ENCODE measurements at regions of chr11 and their contacts with region 1.

Region 1: GRCh38 chr11:26649884-26650283 is 72.0 kb downstream of the SLC5A12 start:
- DNase-seq: peak; percentile 54
- ATAC-seq: peak; percentile 94
- H3K4me3 ChIP-seq: no peak overlapping the region
- H3K27ac ChIP-seq: no peak overlapping the region
- H3K4me1 ChIP-seq: no peaks in the 10 kb centered on the region
- H3K27me3 ChIP-seq: no peaks in the 10 kb centered on the region
- CTCF ChIP-seq: peak; percentile 72 to 83 (median 75)
- EP300 ChIP-seq: no peak
- POLR2A ChIP-seq: no peak
- RAD21 ChIP-seq: peak; percentile 81

Region 2: DNA sequence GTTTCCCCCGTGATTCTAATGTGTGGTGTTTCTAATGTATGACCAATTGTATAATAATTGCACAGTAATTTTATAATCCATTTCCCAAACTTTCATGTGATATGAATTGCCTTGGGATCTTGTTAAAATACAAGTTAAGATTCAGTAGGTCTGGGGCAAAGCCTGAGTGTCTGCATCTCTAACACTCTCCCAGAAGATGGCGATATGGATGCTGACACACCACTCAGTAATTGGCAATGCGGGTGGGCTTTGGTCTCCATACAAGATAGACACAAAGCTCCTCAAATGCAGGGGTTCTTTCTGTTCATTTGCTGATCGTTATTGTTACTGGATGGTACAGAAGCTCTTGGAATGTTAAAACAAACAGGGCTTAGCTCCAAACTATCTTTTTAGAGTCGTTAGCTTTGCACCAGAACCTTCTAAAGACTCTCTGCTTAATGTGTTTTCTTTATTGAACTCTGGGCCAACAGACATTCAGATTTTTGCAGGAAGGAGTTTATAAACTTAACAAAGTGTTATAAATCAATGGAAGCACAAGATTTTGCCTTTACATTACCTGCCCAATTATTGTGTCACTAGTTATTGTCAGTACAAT is 363.3 kb before region 1 on chr11:
- CTCF ChIA-PET with region 1: interaction called, 9 read pairs
- POLR2A ChIA-PET with region 1: no interaction called
- RAD21 ChIA-PET with region 1: no interaction called
- SMC1A ChIA-PET with region 1: interaction called, 10 read pairs
- in situ Hi-C with region 1: no loop called
- intact Hi-C with region 1: no loop called
- DNase-seq: no peak
- ATAC-seq: peak; percentile 82
- H3K4me3 ChIP-seq: no peak overlapping the region
- H3K27ac ChIP-seq: no peak overlapping the region
- H3K4me1 ChIP-seq: no peaks in the 10 kb centered on the region
- H3K27me3 ChIP-seq: no peaks in the 10 kb centered on the region
- CTCF ChIP-seq: peak; percentile 34 to 56 (median 52); a peak in 3 of 6 replicates
- EP300 ChIP-seq: no peak
- POLR2A ChIP-seq: no peak
- RAD21 ChIP-seq: peak; percentile 33; the same call in 1 of the 2 replicates

Region 3: DNA sequence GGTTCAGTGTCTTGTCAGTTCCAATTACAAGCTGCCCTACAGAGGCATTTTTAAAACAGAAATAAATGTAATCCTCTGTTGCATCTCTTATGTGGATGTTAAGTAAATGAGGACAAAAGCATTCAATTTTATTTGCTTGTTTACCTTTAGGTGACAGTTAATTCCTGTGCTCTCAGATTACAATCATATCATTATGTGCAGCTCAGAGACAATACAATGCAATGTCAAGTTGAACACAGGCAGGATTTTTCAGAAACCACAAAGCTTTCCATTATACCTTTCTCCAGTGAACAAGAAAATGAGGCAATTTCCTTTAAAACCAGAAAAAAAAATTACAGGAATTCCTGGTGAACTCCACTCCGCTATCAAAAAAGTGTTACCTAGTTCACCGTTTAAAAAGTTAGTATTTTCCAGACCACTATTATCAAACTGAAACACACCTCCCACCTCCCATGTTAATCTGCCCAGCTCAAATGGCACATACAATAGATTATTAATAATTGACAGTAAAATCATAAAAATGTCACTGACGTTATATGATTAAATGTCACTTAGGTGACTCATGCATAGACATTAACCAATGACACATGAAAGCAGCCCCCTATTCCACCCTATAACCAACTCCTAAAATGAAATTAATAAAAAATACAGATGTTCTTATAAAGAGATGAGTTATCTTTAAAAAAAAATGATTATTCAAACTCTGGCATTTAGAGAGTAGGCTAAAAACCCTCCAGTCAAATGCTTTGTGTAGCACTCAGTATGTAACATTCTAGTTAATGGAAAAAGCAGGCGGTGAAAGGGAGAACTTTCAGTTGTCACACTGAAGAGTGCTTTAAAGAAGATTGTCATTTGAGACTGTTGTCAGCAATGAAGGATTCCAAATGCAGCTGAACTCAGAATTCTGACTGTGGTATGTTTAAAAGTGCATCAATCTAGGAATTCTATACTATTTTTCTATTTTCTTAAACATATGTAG is 176.4 kb before region 1 on chr11:
- CTCF ChIA-PET with region 1: interaction called, 28 read pairs
- POLR2A ChIA-PET with region 1: no interaction called
- RAD21 ChIA-PET with region 1: interaction called, 17 read pairs
- SMC1A ChIA-PET with region 1: interaction called, 37 read pairs
- in situ Hi-C with region 1: no loop called
- intact Hi-C with region 1: loop called (anchors 2 kb)
- DNase-seq: no peak
- ATAC-seq: peak; percentile 39
- H3K4me3 ChIP-seq: no peak overlapping the region
- H3K27ac ChIP-seq: no peak overlapping the region
- H3K4me1 ChIP-seq: no peaks in the 10 kb centered on the region
- H3K27me3 ChIP-seq: no peaks in the 10 kb centered on the region
- CTCF ChIP-seq: no peak
- EP300 ChIP-seq: no peak
- POLR2A ChIP-seq: no peak
- RAD21 ChIP-seq: no peak

Region 4: GRCh38 chr11:26551186-26551801 is 98.6 kb before region 1 on chr11:
- CTCF ChIA-PET with region 1: interaction called, 11 read pairs
- POLR2A ChIA-PET with region 1: no interaction called
- RAD21 ChIA-PET with region 1: interaction called, 6 read pairs
- SMC1A ChIA-PET with region 1: interaction called, 27 read pairs
- in situ Hi-C with region 1: no loop called
- intact Hi-C with region 1: loop called (anchors 1 kb)
- DNase-seq: no peak
- ATAC-seq: peak; percentile 55
- H3K4me3 ChIP-seq: no peak overlapping the region
- H3K27ac ChIP-seq: no peak overlapping the region
- H3K4me1 ChIP-seq: no peaks in the 10 kb centered on the region
- H3K27me3 ChIP-seq: no peaks in the 10 kb centered on the region
- CTCF ChIP-seq: peak in 2 of 3 experiments; percentile 19 to 35; a peak in 3 of 6 replicates
- EP300 ChIP-seq: no peak
- POLR2A ChIP-seq: no peak
- RAD21 ChIP-seq: peak; percentile 49; the same call in 1 of the 2 replicates

Region 5: DNA sequence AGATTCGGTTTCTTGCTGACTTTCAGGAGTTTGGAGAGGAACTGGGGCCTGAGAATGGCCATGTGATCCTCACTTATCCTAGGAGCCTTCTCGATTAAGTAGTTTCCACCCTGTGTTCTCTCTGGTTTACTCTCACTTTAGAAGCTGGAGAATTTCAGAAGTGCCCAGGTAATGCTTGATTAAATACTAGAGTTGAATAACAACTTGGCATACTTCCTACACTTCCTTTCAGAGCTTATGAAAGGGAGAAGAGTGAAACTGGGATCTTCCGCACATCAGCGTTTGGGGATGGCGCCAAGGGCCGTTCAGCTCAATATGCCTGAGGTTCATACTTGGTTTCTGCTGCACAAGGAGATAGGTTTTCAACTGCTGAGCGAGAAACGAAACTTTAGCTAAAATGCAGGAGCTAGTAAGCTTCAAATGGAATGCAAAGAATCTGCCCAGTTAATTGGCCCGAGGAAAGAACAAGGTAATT is 77.1 kb before region 1 on chr11:
- CTCF ChIA-PET with region 1: interaction called, 6 read pairs
- POLR2A ChIA-PET with region 1: no interaction called
- RAD21 ChIA-PET with region 1: interaction called, 7 read pairs
- SMC1A ChIA-PET with region 1: interaction called, 11 read pairs
- in situ Hi-C with region 1: no loop called
- intact Hi-C with region 1: no loop called
- DNase-seq: no peak
- ATAC-seq: peak; percentile 17; the same call in 2 of the 3 replicates
- H3K4me3 ChIP-seq: no peak overlapping the region
- H3K27ac ChIP-seq: no peak overlapping the region
- H3K4me1 ChIP-seq: no peaks in the 10 kb centered on the region
- H3K27me3 ChIP-seq: no peaks in the 10 kb centered on the region; a peak in 1 of 4 replicates
- CTCF ChIP-seq: no peak
- EP300 ChIP-seq: no peak
- POLR2A ChIP-seq: no peak
- RAD21 ChIP-seq: no peak

Region 6: GRCh38 chr11:26621141-26621540 is 28.7 kb before region 1 on chr11:
- CTCF ChIA-PET with region 1: interaction called, 3 read pairs
- POLR2A ChIA-PET with region 1: no interaction called
- RAD21 ChIA-PET with region 1: interaction called, 3 read pairs
- SMC1A ChIA-PET with region 1: interaction called, 10 read pairs
- in situ Hi-C with region 1: no loop called
- intact Hi-C with region 1: no loop called
- DNase-seq: no peak
- ATAC-seq: peak; percentile 49
- H3K4me3 ChIP-seq: no peak overlapping the region
- H3K27ac ChIP-seq: no peak overlapping the region
- H3K4me1 ChIP-seq: no peaks in the 10 kb centered on the region
- H3K27me3 ChIP-seq: no peaks in the 10 kb centered on the region
- CTCF ChIP-seq: no peak
- EP300 ChIP-seq: no peak
- POLR2A ChIP-seq: no peak
- RAD21 ChIP-seq: no peak

Region 7: DNA sequence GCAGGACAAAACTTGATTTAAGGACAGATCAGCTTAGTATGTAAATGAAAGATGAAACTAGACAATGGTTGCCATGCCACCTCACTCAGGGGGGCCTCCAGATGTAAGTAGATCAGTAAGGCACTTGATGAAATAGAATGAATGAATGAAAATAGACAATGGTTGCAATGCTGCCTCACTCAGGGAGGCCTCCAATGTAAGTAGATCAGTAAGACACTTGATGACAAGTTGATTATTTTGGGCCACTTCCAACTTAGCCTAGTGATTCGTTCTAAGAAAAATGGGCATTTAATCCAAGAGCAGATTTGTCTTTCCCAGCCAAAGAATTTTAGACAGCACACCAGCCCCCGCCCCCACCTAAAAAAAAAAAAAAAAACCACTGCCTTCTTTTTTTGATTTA is 91.2 kb after region 1 on chr11:
- CTCF ChIA-PET with region 1: no interaction called
- POLR2A ChIA-PET with region 1: no interaction called
- RAD21 ChIA-PET with region 1: no interaction called
- SMC1A ChIA-PET with region 1: no interaction called
- in situ Hi-C with region 1: no loop called
- intact Hi-C with region 1: loop called (anchors 5 kb)
- DNase-seq: no peak
- ATAC-seq: no peak
- H3K4me3 ChIP-seq: no peak overlapping the region
- H3K27ac ChIP-seq: no peak overlapping the region
- H3K4me1 ChIP-seq: no peaks in the 10 kb centered on the region
- H3K27me3 ChIP-seq: no peaks in the 10 kb centered on the region
- CTCF ChIP-seq: no peak
- EP300 ChIP-seq: no peak
- POLR2A ChIP-seq: no peak
- RAD21 ChIP-seq: no peak

Region 8: GRCh38 chr11:26937386-26937785 is 287.5 kb after region 1 on chr11:
- CTCF ChIA-PET with region 1: no interaction called
- POLR2A ChIA-PET with region 1: no interaction called
- RAD21 ChIA-PET with region 1: no interaction called
- SMC1A ChIA-PET with region 1: no interaction called
- in situ Hi-C with region 1: no loop called
- intact Hi-C with region 1: no loop called
- DNase-seq: no peak
- ATAC-seq: no peak
- H3K4me3 ChIP-seq: no peak overlapping the region
- H3K27ac ChIP-seq: no peak overlapping the region
- H3K4me1 ChIP-seq: no peaks in the 10 kb centered on the region
- H3K27me3 ChIP-seq: no peaks in the 10 kb centered on the region
- CTCF ChIP-seq: no peak
- EP300 ChIP-seq: no peak
- POLR2A ChIP-seq: no peak
- RAD21 ChIP-seq: no peak

Measured in GM12878 (cell line).